Activated naive CD4-positive, alpha-beta T cell treated with anti-CD3 and anti-CD28 coated beads for 36 hours (primary cell): ENCODE measurements at regions of chr4 and their contacts with region 1.

Region 1: GRCh38 chr4:17447675-17448298 is 64.1 kb downstream of the QDPR start:
- DNase-seq: peak; percentile 79
- H3K4me3 Mint-ChIP-seq: no peak overlapping the region
- H3K27ac Mint-ChIP-seq: no peak overlapping the region
- H3K4me1 Mint-ChIP-seq: no peaks in the 10 kb centered on the region
- H3K27me3 Mint-ChIP-seq: no peaks in the 10 kb centered on the region

Region 2: DNA sequence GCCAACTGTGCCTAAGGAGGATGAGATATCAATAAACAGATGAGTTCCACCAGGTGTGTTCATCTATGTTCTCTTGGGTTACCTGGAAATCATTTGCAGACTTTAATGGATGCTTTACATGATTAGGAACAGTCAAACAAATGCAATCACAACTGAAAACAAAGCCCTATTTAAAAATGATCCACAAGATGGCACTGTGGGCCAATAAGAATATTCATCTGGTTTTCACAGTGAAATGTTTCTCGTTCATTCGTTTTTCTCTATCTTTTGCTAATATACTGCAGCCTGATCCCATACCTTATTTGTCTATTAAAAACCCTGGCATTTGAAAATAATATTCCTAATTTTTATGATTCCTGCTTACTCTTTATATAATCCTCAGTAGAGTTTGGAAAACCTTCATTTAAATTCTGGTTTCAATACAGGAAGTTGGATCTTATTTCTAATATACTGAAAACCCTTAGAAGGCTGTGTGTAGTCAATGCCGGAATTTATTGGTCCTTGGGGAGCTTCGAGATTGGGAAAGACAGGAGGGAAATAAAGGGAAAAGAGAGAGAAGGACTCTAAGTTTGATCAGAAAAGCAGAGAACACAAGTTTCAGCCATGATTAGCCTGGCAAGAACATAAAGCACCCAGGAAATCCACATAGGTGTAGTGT is 1157.8 kb before region 1 on chr4:
- CTCF ChIA-PET with region 1: interaction called, 3 read pairs
- intact Hi-C with region 1: loop called (anchors 1 kb)
- DNase-seq: peak; percentile 7
- H3K4me3 Mint-ChIP-seq: no peak overlapping the region
- H3K27ac Mint-ChIP-seq: no peak overlapping the region
- H3K4me1 Mint-ChIP-seq: peaks cover 5% of the 10 kb centered on the region
- H3K27me3 Mint-ChIP-seq: peaks cover 16% of the 10 kb centered on the region

Region 3: DNA sequence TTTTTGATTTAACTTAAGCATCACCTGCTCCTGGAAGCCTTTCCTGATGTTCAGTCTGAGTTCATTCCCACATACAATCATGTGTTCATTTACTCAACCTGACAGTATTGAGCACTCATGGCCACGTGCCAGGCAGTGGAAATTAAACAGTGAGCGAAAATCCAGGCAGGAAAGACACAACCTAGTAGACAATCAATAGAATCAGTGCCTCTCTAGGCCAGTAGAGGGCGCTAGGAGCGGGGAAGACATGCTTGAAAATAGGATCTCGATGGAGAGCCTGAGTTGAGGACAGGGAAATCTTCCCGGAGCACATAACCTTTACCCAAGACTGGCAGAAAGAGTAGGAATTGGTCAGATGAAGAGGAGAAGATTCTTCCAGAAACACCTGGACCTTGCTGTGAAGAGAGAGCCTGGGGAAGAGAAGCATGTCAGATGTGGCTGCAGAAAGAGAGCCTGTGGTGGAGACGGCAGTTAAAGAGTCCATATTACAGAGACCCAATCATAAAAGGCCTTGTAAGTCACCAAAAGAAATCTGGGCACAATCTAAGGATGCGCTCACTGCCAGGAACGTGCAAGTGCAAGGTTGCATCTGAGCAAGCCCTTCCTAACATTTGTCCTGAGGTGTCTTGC is 652.9 kb before region 1 on chr4:
- CTCF ChIA-PET with region 1: no interaction called
- intact Hi-C with region 1: loop called (anchors 1 kb)
- DNase-seq: peak; percentile 67
- H3K4me3 Mint-ChIP-seq: no peak overlapping the region
- H3K27ac Mint-ChIP-seq: no peak overlapping the region
- H3K4me1 Mint-ChIP-seq: no peaks in the 10 kb centered on the region
- H3K27me3 Mint-ChIP-seq: no peaks in the 10 kb centered on the region

Region 4: DNA sequence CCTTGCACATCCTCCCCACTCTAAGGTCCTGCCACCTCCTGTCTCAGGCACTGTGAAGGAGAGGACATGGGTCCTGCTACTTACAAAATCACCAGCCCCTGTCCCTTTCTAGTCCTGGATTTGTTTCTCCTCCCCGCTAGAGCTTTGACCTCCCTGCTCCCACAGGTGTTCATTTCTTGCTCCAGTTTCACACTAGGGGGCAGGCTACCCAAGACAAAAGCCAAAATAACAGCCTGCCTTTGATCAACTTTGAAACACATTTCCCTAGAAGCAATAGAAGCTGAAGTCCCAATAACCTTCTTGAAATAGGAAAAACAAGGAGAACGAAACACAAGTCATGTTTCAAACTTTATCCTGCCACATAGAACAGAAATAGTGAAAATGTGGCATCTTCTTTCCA is 100.3 kb before region 1 on chr4:
- CTCF ChIA-PET with region 1: interaction called, 63 read pairs
- intact Hi-C with region 1: loop called (anchors 1 kb)
- DNase-seq: peak; percentile 65
- H3K4me3 Mint-ChIP-seq: no peak overlapping the region
- H3K27ac Mint-ChIP-seq: no peak overlapping the region
- H3K4me1 Mint-ChIP-seq: no peaks in the 10 kb centered on the region
- H3K27me3 Mint-ChIP-seq: no peaks in the 10 kb centered on the region